Activated CD4-positive, alpha-beta T cell treated with anti-CD3 and anti-CD28 coated beads for 36 hours (primary cell): ENCODE measurements at regions of chr1 and their contacts with region 1.

Region 1: DNA sequence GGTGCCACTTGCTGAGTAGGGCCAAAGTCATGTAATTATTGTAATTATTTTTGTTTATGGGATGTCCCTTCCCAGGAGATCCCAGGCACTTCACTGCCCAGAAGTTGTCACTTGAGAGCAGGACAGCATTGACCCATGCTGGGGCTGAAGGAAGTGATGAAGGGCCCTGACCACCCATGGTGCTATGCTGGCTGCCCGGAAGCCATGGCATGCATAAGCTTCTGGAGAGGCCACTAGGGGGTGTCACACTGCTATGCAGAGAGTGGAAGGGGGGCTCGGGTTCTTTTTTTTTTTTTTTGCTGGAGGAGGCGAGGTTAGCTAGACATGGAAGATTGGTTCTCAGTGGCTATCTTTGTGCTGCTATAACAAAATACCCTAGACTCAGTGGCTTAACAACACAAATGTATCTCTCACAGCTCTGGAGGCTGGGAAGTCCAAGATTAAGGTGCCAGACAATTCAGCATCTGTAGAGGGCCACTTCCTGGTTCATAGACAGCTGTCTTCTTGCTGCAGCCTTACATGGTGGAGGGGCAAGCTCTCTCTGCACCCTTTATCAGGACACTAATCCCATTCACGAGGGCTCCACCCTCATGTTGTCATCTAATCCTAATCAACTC is 84.9 kb downstream of the CNIH3 start:
- DNase-seq: peak; percentile 25
- ATAC-seq: no peak
- H3K4me3 Mint-ChIP-seq: no peak overlapping the region
- H3K27ac Mint-ChIP-seq: no peak overlapping the region
- H3K4me1 Mint-ChIP-seq: no peaks in the 10 kb centered on the region
- H3K27me3 Mint-ChIP-seq: no peaks in the 10 kb centered on the region

Region 2: GRCh38 chr1:224851210-224851847 is 150.3 kb after region 1 on chr1:
- CTCF ChIA-PET with region 1: interaction called, 6 read pairs
- POLR2A ChIA-PET with region 1: no interaction called
- intact Hi-C with region 1: loop called (anchors 1 to 5 kb)
- DNase-seq: peak; percentile 77
- ATAC-seq: peak; percentile 60
- H3K4me3 Mint-ChIP-seq: no peak overlapping the region
- H3K27ac Mint-ChIP-seq: no peak overlapping the region
- H3K4me1 Mint-ChIP-seq: no peaks in the 10 kb centered on the region
- H3K27me3 Mint-ChIP-seq: peaks cover 2% of the 10 kb centered on the region